PC-9 (cell line): ENCODE measurements at regions of chr1 and their contacts with region 1.

Region 1: DNA sequence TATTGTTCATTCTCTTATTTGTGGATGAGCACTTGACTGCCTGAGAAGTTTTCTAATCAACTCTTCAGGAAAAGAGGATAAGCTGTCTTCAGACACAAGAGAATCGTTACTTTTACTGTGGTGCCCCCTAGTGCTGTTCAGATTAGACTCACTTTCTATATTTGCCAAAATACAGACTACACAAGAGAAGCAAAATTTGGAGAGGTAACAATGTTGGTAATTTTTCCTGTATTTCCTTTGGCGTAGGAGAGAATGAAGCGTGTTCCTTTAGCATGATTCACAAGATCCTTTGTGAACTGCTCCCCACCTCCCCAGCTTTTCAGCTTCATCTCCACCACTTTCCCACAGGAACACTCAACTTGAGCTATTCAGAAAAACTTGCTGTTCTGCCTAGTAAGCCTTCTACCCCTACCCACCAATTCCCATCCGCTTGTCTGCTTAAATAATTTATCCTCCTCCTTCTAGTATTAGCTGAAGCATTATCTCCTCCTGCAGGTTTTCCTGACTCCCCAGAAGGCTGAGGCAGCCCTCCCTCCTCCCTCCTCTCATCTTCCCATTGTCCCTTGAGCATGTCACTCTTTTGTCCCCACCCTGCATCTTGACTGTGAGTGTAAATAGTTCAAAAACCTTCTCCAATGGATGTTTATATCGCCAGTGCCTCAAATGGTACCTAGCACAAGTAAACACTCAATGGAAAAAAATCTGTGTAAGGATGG is 4.5 kb downstream of the TNFSF4 start:
- DNase-seq: peak in 1 of 2 experiments; percentile 33
- H3K4me3 ChIP-seq: no peak overlapping the region
- H3K27ac ChIP-seq: no peak overlapping the region
- H3K4me1 ChIP-seq: no peaks in the 10 kb centered on the region
- H3K27me3 ChIP-seq: no peaks in the 10 kb centered on the region
- CTCF ChIP-seq: peak; percentile 78

Region 2: DNA sequence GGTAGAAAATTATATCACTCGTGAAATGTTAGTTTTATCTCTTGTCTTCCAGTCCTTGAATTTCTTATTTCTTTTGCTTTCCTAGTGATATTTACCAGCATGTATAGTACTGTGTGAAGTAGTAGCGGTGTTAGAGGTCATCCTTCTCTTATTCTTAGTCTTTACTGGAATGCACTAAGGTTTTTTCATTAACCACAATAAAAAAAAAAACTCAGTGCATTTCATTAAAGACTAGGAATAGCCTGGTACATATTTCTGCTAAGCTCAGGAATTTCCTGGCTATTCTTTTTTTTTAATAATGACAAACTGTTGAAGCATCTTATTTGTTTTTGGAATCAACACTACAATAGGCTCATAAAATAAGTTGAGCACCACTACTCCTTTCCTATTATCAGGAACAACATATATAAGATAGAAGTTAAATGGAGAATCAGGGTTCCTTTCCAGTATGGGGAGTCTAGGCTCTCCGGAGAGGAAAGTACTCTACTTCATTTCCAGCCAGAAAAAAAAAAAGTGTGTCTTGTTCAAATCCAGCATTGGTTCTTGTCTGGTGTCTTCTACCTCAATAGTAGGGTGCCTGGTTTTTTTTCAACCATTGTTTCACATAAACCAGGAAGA is 211.9 kb before region 1 on chr1:
- CTCF ChIA-PET with region 1: no interaction called
- POLR2A ChIA-PET with region 1: no interaction called
- intact Hi-C with region 1: loop called (anchors 5 kb)
- DNase-seq: no peak
- H3K4me3 ChIP-seq: no peak overlapping the region
- H3K27ac ChIP-seq: no peak overlapping the region
- H3K4me1 ChIP-seq: no peaks in the 10 kb centered on the region
- H3K27me3 ChIP-seq: no peaks in the 10 kb centered on the region
- CTCF ChIP-seq: no peak

Region 3: DNA sequence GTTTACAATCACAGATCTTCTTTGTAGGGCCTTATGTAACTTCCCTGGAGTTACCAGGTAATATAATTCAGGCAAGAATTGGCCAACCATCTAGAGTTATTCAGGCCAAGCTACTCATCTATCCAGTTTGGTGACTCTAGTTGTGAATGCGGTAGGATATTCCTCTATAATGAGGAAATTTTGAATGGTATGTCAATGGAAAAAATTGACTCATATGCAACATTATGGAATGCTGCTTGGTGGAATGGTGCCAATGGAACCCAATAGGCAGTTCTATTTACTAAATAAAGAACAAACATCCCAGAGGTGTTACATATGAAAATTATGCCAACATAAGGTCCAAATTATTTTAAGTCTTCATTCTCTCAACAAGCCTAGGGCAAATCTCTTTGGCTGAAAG is 146.2 kb before region 1 on chr1:
- CTCF ChIA-PET with region 1: no interaction called
- POLR2A ChIA-PET with region 1: no interaction called
- intact Hi-C with region 1: loop called (anchors 2 kb)
- DNase-seq: peak; percentile 56 to 94
- H3K4me3 ChIP-seq: no peak overlapping the region
- H3K27ac ChIP-seq: peak overlapping the region; percentile 64
- H3K4me1 ChIP-seq: peaks cover 39% of the 10 kb centered on the region
- H3K27me3 ChIP-seq: no peaks in the 10 kb centered on the region
- CTCF ChIP-seq: no peak

Region 4: GRCh38 chr1:173241528-173242347 is 39.1 kb after region 1 on chr1:
- CTCF ChIA-PET with region 1: no interaction called
- POLR2A ChIA-PET with region 1: no interaction called
- intact Hi-C with region 1: no loop called
- DNase-seq: no peak
- H3K4me3 ChIP-seq: no peak overlapping the region
- H3K27ac ChIP-seq: no peak overlapping the region
- H3K4me1 ChIP-seq: no peaks in the 10 kb centered on the region
- H3K27me3 ChIP-seq: no peaks in the 10 kb centered on the region
- CTCF ChIP-seq: no peak